Activated T-helper 1 cell treated with anti-CD3 and anti-CD28 coated beads, Interleukin-12 subunit alpha, Interleukin-12 subunit beta, Interleukin-2, Interleukin-4 antibody, amounts not matched to agents 30 ng/mL and 10 ng/mL and 1 ng/mL, durations not matched to agents 14 hours and 24 hours and 36 hours (primary cell): ENCODE measurements at regions of chrX and their contacts with region 1.

Region 1: GRCh38 chrX:45710081-45710801 is 509.6 kb upstream of the DIPK2B start:
- DNase-seq: peak; percentile 16
- H3K4me3 Mint-ChIP-seq: peak overlapping the region; percentile 11
- H3K27ac Mint-ChIP-seq: peak overlapping the region; percentile 90
- H3K4me1 Mint-ChIP-seq: peaks cover 45% of the 10 kb centered on the region
- H3K27me3 Mint-ChIP-seq: no peaks in the 10 kb centered on the region

Region 2: GRCh38 chrX:45515262-45516215 is 194.7 kb before region 1 on chrX:
- intact Hi-C with region 1: loop called (anchors 1 kb)
- DNase-seq: peak; percentile 1
- H3K4me3 Mint-ChIP-seq: no peak overlapping the region
- H3K27ac Mint-ChIP-seq: peak overlapping the region; percentile 65
- H3K4me1 Mint-ChIP-seq: peaks cover 25% of the 10 kb centered on the region
- H3K27me3 Mint-ChIP-seq: no peaks in the 10 kb centered on the region

Region 3: GRCh38 chrX:45621376-45622041 is 88.7 kb before region 1 on chrX:
- intact Hi-C with region 1: loop called (anchors 1 kb)
- DNase-seq: no peak
- H3K4me3 Mint-ChIP-seq: no peak overlapping the region
- H3K27ac Mint-ChIP-seq: peak overlapping the region; percentile 91
- H3K4me1 Mint-ChIP-seq: peaks cover 19% of the 10 kb centered on the region
- H3K27me3 Mint-ChIP-seq: no peaks in the 10 kb centered on the region

Region 4: DNA sequence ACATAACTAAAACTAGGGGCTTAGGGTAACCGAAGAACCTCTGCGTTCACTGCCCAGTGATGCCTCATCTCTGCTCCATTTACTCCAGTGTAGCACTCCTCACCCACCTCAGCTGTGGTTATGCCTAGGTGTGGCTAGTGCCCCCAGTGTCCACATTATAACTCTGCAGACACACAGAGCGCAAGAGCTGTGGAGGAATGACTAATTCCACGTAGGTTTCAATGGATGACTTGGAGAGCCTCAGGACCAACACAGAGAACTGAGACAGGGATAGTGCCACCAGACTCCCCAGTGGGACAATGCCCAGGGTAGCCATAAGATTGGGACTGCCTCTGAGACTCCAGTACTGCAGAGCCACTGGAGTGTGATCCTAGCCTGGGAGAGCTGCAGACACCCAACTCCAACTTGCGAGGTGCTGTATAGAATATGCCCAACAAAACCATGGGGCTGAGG is 32.9 kb after region 1 on chrX:
- intact Hi-C with region 1: no loop called
- DNase-seq: no peak
- H3K4me3 Mint-ChIP-seq: no peak overlapping the region
- H3K27ac Mint-ChIP-seq: no peak overlapping the region
- H3K4me1 Mint-ChIP-seq: peaks cover 22% of the 10 kb centered on the region
- H3K27me3 Mint-ChIP-seq: no peaks in the 10 kb centered on the region

Region 5: DNA sequence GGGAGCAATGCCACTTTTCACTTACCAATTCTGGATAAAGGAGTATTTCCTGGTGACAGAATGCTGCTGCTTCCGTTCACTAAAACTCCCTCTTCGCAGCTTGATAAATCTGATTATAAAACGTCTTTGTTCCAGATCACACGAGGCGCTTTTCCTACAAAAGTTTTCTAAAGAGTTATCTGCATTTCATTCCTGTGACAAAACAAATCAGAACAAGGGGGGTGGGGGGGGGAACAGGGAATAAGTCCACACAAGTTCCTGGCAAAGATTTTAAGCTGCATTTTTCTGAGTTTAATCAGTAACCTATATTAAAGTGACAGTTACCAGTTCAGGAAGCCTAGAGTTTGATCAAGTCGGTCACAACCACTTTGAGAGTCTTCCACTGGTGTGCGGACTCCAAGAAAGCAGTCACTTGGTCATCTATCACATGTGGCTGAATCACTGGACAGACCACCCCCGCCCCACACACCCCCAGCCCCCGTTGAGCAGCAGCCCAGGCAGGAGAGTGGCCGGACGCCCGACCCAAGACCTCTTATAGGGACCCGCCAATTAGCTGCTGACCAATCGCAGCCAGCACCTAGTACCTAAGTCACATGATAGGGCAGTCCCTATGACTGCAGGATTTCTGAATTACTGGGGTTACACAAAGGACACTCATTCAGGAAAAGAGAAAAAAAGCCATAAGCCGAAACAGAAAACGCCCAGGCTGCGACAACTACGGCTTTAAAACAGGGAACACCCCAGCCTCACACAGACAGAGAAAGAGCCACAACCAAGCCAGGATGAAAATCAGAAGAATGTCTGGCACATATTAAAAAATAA is 59.7 kb after region 1 on chrX:
- intact Hi-C with region 1: loop called (anchors 1 kb)
- DNase-seq: peak; percentile 6
- H3K4me3 Mint-ChIP-seq: peak overlapping the region; percentile 98
- H3K27ac Mint-ChIP-seq: peak overlapping the region; percentile 98
- H3K4me1 Mint-ChIP-seq: peaks cover 59% of the 10 kb centered on the region
- H3K27me3 Mint-ChIP-seq: no peaks in the 10 kb centered on the region

Region 6: GRCh38 chrX:45806410-45807121 is 96.3 kb after region 1 on chrX:
- intact Hi-C with region 1: loop called (anchors 1 kb)
- DNase-seq: peak; percentile 41
- H3K4me3 Mint-ChIP-seq: peak overlapping the region; percentile 66
- H3K27ac Mint-ChIP-seq: peak overlapping the region; percentile 96
- H3K4me1 Mint-ChIP-seq: peaks cover 93% of the 10 kb centered on the region
- H3K27me3 Mint-ChIP-seq: peaks cover 3% of the 10 kb centered on the region

Region 7: GRCh38 chrX:46325312-46325877 is 615.2 kb after region 1 on chrX:
- intact Hi-C with region 1: loop called (anchors 2 kb)
- DNase-seq: no peak
- H3K4me3 Mint-ChIP-seq: no peak overlapping the region
- H3K27ac Mint-ChIP-seq: peak overlapping the region; percentile 65
- H3K4me1 Mint-ChIP-seq: peaks cover 49% of the 10 kb centered on the region
- H3K27me3 Mint-ChIP-seq: no peaks in the 10 kb centered on the region